ENCODE measurements at regions of chr5 and their contacts with region 1.

Region 1: GRCh38 chr5:172697123-172698121 is 56.4 kb downstream of the NEURL1B start:
- H3K4me3 ChIP-seq: peak overlapping the region; percentile 34
- H3K27ac ChIP-seq: no peak overlapping the region
- H3K4me1 ChIP-seq: no peaks in the 10 kb centered on the region
- CTCF ChIP-seq: peak; percentile 88

Region 2: GRCh38 chr5:172458976-172459782 is 238.2 kb before region 1 on chr5:
- CTCF ChIA-PET with region 1: interaction called, 14 read pairs
- POLR2A ChIA-PET with region 1: no interaction called
- H3K4me3 ChIP-seq: no peak overlapping the region
- H3K27ac ChIP-seq: no peak overlapping the region
- H3K4me1 ChIP-seq: no peaks in the 10 kb centered on the region; the same call in 1 of the 2 replicates
- CTCF ChIP-seq: no peak

Region 3: DNA sequence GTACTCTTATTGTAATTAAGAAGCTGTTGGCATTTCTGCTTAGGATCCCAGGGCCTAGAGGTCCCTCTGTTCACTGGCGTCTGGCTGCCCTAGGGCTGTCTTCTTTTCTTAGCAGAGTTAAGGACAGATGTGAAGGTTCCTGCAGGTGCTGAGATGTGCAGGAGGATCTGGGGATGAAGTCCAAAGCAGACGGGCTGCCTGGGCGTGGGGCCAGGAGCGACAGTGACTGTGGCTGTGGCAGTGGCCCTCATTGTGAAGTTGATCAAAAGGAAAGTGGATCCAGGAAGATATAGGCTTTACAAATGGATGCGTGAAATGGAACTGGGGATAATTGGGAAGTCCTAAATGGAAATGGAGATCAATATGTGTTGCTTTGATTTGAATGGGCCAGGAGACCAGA is 224.0 kb before region 1 on chr5:
- CTCF ChIA-PET with region 1: interaction called, 159 read pairs
- POLR2A ChIA-PET with region 1: interaction called, 4 read pairs
- H3K4me3 ChIP-seq: no peak overlapping the region
- H3K27ac ChIP-seq: no peak overlapping the region
- H3K4me1 ChIP-seq: no peaks in the 10 kb centered on the region
- CTCF ChIP-seq: no peak

Region 4: GRCh38 chr5:172479044-172479783 is 218.2 kb before region 1 on chr5:
- CTCF ChIA-PET with region 1: interaction called, 159 read pairs
- POLR2A ChIA-PET with region 1: no interaction called
- H3K4me3 ChIP-seq: no peak overlapping the region
- H3K27ac ChIP-seq: no peak overlapping the region
- H3K4me1 ChIP-seq: no peaks in the 10 kb centered on the region
- CTCF ChIP-seq: peak; percentile 97

Region 5: DNA sequence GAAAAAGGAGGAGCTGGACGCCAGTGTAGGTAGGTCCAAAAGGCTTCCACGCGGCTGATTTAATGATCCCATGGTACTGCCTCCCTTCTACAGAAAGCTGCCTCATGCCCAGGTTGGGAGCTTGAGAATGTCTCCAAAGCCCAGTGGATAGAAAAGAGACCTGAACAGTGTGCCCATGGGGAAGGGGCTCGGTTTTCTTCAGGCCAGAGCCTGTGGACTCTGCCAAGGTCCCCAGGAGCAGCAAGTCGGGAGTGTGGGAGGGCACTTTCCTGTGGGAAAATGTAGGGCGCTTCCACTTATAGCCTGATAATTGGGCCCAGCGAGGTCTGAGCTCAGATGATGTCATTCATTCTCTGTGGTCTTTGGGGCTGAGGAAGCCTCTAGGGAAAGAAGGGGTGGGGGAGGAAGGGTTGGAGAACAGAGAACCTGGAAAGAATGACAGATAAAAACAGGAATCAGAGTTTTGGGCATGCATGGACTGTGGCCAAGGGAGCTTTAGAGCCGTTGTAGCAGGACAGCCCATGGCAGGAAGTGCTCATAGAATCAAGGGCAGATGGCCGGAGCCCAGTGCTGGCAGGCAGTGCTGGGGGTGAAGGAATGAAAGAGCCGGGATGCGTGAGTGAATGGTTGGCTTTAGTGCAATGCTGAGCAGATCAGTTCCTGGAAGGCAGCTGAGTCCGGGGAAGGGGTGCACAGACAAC is 200.6 kb before region 1 on chr5:
- CTCF ChIA-PET with region 1: interaction called, 11 read pairs
- POLR2A ChIA-PET with region 1: no interaction called
- H3K4me3 ChIP-seq: no peak overlapping the region
- H3K27ac ChIP-seq: no peak overlapping the region
- H3K4me1 ChIP-seq: no peaks in the 10 kb centered on the region
- CTCF ChIP-seq: no peak

Region 6: DNA sequence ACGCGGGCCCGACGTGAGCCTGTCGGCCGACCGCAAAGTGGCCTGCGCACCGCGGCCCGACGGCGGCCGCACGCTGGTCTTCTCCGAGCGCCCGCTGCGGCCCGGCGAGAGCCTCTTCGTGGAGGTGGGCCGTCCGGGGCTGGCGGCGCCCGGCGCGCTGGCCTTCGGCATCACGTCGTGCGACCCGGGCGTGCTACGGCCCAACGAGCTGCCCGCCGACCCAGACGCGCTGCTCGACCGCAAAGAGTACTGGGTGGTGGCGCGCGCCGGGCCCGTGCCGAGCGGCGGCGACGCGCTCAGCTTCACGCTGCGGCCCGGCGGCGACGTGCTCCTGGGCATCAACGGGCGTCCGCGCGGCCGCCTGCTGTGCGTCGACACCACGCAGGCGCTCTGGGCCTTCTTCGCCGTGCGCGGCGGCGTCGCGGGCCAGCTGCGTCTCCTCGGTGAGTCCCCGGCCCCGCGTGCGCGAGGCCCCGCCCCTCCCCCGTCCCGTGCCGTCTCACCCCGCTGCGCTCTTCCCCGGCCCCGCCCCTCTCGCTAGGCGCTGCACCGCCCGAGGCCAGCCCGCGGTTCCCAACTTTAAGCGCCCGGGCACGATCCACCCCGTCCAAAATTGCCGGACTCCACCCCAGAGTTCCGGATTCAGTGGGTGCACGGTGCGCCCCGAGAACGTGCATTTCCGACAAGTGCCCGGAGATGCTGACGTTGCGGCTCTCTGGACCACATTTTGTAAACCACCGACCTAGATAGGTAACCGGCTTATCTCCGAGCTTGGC is 13.5 kb before region 1 on chr5:
- CTCF ChIA-PET with region 1: interaction called, 11 read pairs
- POLR2A ChIA-PET with region 1: no interaction called
- H3K4me3 ChIP-seq: no peak overlapping the region
- H3K27ac ChIP-seq: no peak overlapping the region
- H3K4me1 ChIP-seq: no peaks in the 10 kb centered on the region
- CTCF ChIP-seq: no peak

Region 7: DNA sequence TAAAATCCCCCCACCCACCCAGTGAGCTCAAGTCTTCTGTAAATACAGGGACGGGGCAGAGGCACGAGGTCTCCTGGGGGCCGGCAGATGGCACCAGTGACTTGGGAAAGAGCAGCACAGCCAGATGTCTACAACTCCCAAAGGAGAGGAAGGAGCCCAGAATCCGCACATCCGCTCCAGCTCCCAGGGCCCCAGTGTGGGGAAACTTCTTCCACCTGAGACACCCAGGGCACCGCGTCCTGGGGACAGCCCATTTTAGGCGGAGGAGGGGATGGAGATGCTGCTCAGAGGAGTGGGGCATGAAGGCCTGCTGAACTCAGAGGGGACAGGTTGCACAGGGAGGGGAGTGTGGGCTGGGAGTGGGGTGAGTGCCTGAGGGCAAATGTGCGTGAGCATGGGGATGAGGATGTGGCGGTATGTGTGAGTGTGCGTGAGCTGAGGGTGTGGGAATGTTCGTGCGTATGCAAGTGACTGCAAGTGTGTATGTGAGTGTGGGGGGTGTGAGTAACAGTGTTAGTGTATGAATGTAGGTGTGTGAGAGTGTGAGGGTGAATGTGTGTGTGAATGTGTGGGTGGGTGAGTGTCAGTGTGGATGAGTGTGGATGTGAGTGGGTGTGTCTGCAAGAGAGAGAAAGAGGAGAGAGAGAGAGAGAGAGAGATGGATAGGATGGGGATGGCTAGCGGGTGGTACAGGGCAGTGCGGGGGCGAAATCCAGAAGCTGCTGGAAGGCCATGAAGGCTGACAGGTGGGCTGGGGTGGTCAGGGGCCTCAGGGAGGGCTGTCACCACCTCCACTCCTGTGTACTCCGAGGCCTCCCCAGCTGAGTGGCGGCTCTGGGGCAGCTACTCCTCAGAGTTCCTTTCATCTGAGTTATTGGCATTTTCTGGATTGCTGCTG is 10.1 kb after region 1 on chr5:
- CTCF ChIA-PET with region 1: interaction called, 23 read pairs
- POLR2A ChIA-PET with region 1: no interaction called
- H3K4me3 ChIP-seq: no peak overlapping the region
- H3K27ac ChIP-seq: no peak overlapping the region
- H3K4me1 ChIP-seq: no peaks in the 10 kb centered on the region; the same call in 1 of the 2 replicates
- CTCF ChIP-seq: peak; percentile 70; the same call in 1 of the 2 replicates